ENCODE measurements at regions of chr11 and their contacts with region 1.

Region 1: GRCh38 chr11:95652002-95652472 is 137.5 kb downstream of the FAM76B start:
- DNase-seq: no peak
- H3K4me3 ChIP-seq: no peak overlapping the region
- H3K27ac ChIP-seq: no peak overlapping the region
- H3K4me1 ChIP-seq: no peaks in the 10 kb centered on the region
- H3K27me3 ChIP-seq: 0 out of 2 replicates have a peak, but pooled peaks cover 4% of the 10 kb centered on the region
- CTCF ChIP-seq: no peak

Region 2: GRCh38 chr11:95187723-95188122 is 464.3 kb before region 1 on chr11:
- CTCF ChIA-PET with region 1: no interaction called
- POLR2A ChIA-PET with region 1: interaction called, 20 read pairs
- intact Hi-C with region 1: no loop called
- DNase-seq: no peak
- H3K4me3 ChIP-seq: no peak overlapping the region
- H3K27ac ChIP-seq: no peak overlapping the region
- H3K4me1 ChIP-seq: no peaks in the 10 kb centered on the region
- H3K27me3 ChIP-seq: no peaks in the 10 kb centered on the region
- CTCF ChIP-seq: no peak

Region 3: GRCh38 chr11:95512682-95513081 is 139.4 kb before region 1 on chr11:
- CTCF ChIA-PET with region 1: no interaction called
- POLR2A ChIA-PET with region 1: no interaction called
- intact Hi-C with region 1: no loop called
- DNase-seq: no peak
- H3K4me3 ChIP-seq: no peak overlapping the region
- H3K27ac ChIP-seq: no peak overlapping the region
- H3K4me1 ChIP-seq: no peaks in the 10 kb centered on the region
- H3K27me3 ChIP-seq: no peaks in the 10 kb centered on the region
- CTCF ChIP-seq: no peak